ENCODE measurements at regions of chr16 and their contacts with region 1.

Region 1: DNA sequence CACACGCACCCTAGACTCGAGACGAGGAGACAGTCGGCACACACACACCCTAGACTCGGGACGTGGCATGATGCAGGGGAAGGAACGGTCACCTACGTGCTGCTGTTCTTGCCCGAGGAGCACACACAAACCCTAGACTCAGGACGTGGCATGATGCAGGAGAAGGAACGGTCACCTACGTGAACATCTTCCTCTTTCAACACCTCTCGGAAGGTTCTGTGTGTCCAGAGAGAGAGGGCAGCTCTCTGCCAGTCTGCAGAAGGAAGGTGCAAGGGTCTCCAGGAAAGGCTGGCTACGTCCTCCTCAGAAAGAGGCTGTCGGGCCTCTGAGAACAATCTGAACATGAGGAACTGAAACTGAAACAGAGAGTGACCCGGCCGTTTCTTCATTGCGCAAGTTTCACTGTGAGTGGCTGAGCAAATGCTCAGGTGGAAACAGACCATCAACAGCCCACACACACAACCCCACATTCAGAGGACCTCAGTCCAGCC is 43.4 kb downstream of the ZNF276 start:
- DNase-seq: peak in 1 of 2 donors; percentile 26
- ATAC-seq: peak in 7 of 8 donors; percentile 51 to 82 (median 72)
- H3K4me3 ChIP-seq: peak overlapping the region in 3 of 10 donors; percentile 5 to 46 (median 15)
- H3K27ac ChIP-seq: peak overlapping the region in 2 of 10 donors; percentile 35 to 87
- H3K4me1 ChIP-seq: peaks cover 0 to 34% (median 0%) of the 10 kb centered on the region in 9 donors
- H3K27me3 ChIP-seq: no peaks in the 10 kb centered on the region
- CTCF ChIP-seq: no peak

Region 2: GRCh38 chr16:89431158-89431584 is 333.6 kb before region 1 on chr16:
- intact Hi-C with region 1: loop called in 1 of 10 experiments (anchors 2 kb)
- DNase-seq: no peak
- ATAC-seq: peak in 7 of 8 donors; percentile 29 to 76 (median 67)
- H3K4me3 ChIP-seq: no peak overlapping the region
- H3K27ac ChIP-seq: no peak overlapping the region
- H3K4me1 ChIP-seq: peaks cover 20 to 67% (median 43%) of the 10 kb centered on the region in 9 donors
- H3K27me3 ChIP-seq: no peaks in the 10 kb centered on the region
- CTCF ChIP-seq: no peak

Region 3: DNA sequence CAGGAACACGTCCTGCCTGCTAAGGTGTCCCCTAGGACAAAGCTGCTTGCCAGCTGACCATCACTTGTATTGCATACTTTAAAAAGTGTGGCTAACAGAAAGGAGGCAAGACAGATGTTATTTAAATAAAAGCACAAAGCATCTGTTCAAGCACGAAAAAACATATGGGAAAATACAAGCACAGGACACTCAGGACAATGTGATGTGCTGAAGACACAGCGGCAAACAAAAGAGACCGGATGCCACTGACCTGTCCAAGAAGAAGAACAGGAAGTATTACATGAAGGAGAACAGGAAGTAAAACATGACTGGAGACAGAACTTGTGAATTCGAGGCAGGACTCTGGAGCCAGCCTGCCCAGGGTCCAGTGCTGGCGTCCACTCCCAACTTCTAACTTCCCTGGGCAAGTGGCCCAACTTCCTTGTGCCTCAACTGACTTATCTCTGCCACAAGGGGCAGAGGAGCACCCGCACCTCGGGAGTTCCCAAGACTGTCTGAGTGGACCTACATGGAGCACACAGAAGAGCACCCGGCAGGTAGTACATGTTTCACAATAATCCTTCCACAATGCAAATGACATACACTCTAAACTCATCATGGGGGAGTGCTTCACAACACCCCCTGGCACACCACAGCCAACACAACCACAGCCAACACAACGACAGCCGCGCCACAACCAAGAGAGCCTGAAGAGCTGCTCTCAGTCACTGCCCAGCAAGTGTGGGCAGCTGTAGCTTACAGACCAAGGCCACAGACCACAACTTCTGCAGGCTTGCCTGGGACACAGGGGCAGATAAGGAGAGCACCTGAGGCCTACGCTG is 311.0 kb before region 1 on chr16:
- intact Hi-C with region 1: loop called in 1 of 10 experiments (anchors 5 kb)
- DNase-seq: peak in 1 of 2 donors; percentile 29
- ATAC-seq: peak; percentile 52 to 80 (median 62)
- H3K4me3 ChIP-seq: no peak overlapping the region
- H3K27ac ChIP-seq: peak overlapping the region in 3 of 10 donors; percentile 27 to 66 (median 33)
- H3K4me1 ChIP-seq: peaks cover 22 to 87% (median 72%) of the 10 kb centered on the region in 9 donors
- H3K27me3 ChIP-seq: no peaks in the 10 kb centered on the region
- CTCF ChIP-seq: peak in 7 of 9 donors; percentile 10 to 46 (median 31)

Region 4: DNA sequence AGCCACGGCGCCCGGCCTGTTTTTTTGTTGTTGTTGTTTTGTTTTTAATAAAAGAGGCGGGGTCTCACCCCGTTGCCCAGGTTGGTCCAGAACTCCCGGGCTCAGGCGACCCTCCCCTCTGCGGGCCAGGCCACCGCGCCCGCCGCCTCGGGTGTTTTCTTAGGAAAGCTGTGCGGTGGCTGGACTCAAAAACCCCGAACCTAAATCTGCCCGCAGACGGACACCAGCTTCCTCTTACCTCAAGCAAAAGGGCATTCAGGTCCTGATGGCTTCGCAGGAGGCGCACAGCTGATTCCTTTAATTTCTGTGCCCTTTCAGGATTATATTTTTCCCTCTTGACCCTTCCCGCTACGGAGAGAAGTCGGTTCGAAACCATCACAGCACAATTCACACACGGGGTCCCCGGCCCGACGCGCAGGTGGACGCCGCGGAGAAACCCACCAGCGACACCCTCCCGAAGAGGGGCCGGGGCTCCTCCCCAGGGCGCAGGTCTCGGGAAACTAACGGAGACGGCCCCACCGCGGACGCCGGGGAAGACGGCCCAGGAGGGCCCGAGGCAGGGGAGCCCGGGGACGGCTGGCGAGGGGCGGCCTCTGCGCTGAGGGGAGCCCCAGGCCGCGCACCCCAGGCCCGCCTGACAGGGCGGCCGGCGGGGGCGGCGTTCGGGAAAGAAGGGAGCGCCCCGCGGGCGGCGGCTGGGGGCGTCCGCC is 51.0 kb after region 1 on chr16:
- intact Hi-C with region 1: no loop called
- DNase-seq: no peak
- ATAC-seq: peak in 1 of 8 donors; percentile 2
- H3K4me3 ChIP-seq: peak overlapping the region; percentile 14 to 99 (median 69)
- H3K27ac ChIP-seq: peak overlapping the region in 1 of 10 donors; percentile 38
- H3K4me1 ChIP-seq: peaks cover 3 to 30% (median 14%) of the 10 kb centered on the region in 9 donors
- H3K27me3 ChIP-seq: peaks cover 0 to 7% (median 0%) of the 10 kb centered on the region in 7 donors
- CTCF ChIP-seq: no peak

Region 5: GRCh38 chr16:89842471-89843408 is 78.0 kb after region 1 on chr16:
- intact Hi-C with region 1: no loop called
- DNase-seq: peak; percentile 50 to 51
- ATAC-seq: peak; percentile 63 to 83 (median 75)
- H3K4me3 ChIP-seq: no peak overlapping the region
- H3K27ac ChIP-seq: no peak overlapping the region
- H3K4me1 ChIP-seq: peaks cover 0 to 28% (median 8%) of the 10 kb centered on the region in 9 donors
- H3K27me3 ChIP-seq: peaks cover 0 to 12% (median 0%) of the 10 kb centered on the region in 7 donors
- CTCF ChIP-seq: no peak

Region 6: GRCh38 chr16:89860747-89861304 is 96.1 kb after region 1 on chr16:
- intact Hi-C with region 1: loop called in 3 of 10 experiments (anchors 5 to 10 kb)
- DNase-seq: peak; percentile 49 to 71
- ATAC-seq: peak; percentile 64 to 81 (median 78)
- H3K4me3 ChIP-seq: no peak overlapping the region
- H3K27ac ChIP-seq: no peak overlapping the region
- H3K4me1 ChIP-seq: peaks cover 0 to 32% (median 21%) of the 10 kb centered on the region in 9 donors
- H3K27me3 ChIP-seq: no peaks in the 10 kb centered on the region
- CTCF ChIP-seq: peak; percentile 91 to 98 (median 96)

Measured in heart right ventricle (tissue), 16 donors.